ENCODE measurements at regions of chr15 and their contacts with region 1.

Region 1: GRCh38 chr15:70722266-70723121 is 40.9 kb downstream of the UACA start:
- DNase-seq: peak in 4 of 5 donors; percentile 25 to 39 (median 30)
- H3K4me3 ChIP-seq: no peak overlapping the region
- H3K4me3 Mint-ChIP-seq: no peak overlapping the region
- H3K27ac ChIP-seq: no peak overlapping the region
- H3K27ac Mint-ChIP-seq: no peak overlapping the region
- H3K4me1 ChIP-seq: no peaks in the 10 kb centered on the region
- H3K4me1 Mint-ChIP-seq: peaks cover 0 to 2% (median 0%) of the 10 kb centered on the region in 4 donors
- H3K27me3 ChIP-seq: no peaks in the 10 kb centered on the region
- H3K27me3 Mint-ChIP-seq: peaks cover 13 to 14% of the 10 kb centered on the region in 2 donors

Region 2: DNA sequence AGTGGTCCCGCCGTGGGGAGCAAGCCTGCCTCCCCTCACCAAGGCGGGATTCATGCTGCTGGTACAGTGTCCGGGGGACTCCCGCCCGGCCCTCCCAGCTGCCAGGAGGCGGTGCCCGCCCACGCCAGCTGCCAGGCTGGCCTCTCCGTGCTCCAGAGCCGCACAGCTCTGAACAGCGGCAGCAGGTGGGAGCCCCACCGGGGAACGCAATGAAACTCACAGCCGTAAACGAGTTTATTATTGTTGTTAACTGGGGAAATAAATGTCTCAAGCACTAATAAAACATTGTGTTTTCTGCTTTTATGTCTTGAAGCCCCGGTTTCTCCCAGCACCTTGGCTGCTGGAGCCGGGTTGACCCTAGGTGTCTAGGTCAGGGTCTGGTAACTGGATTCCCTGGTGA is 307.1 kb before region 1 on chr15:
- CTCF ChIA-PET with region 1: no interaction called
- POLR2A ChIA-PET with region 1: no interaction called
- intact Hi-C with region 1: no loop called
- DNase-seq: no peak
- H3K4me3 ChIP-seq: no peak overlapping the region
- H3K4me3 Mint-ChIP-seq: no peak overlapping the region
- H3K27ac ChIP-seq: no peak overlapping the region
- H3K27ac Mint-ChIP-seq: no peak overlapping the region
- H3K4me1 ChIP-seq: no peaks in the 10 kb centered on the region
- H3K4me1 Mint-ChIP-seq: peaks cover 0 to 2% (median 0%) of the 10 kb centered on the region in 4 donors
- H3K27me3 ChIP-seq: no peaks in the 10 kb centered on the region
- H3K27me3 Mint-ChIP-seq: peaks cover 6 to 13% of the 10 kb centered on the region in 2 donors

Region 3: DNA sequence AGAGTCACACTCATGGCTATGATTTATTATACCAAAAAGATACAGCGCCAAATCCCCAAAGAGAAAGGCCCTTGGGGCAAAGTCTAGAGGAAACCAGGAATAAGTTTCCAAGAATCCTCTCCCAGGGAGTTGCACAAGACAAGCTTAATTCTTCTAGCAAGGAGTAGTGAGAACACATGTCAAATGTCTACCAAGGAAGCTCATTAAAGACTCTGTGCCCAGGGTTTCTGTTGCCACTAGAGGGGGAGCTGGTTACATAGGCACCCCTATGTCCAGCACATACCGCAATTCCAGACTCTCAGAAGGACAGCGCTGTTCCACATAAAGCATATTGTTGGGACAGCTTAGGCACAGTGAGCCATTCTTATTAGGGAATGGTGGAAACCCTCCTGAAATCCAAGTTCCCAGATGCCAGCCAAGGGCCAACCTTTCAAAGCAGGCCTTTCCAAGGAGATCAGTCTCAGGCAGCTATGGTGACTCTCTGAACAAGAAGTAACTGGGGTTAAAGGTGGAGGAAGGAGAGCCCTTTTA is 153.3 kb before region 1 on chr15:
- CTCF ChIA-PET with region 1: interaction called, 12 read pairs
- POLR2A ChIA-PET with region 1: no interaction called
- intact Hi-C with region 1: no loop called
- DNase-seq: no peak
- H3K4me3 ChIP-seq: no peak overlapping the region
- H3K4me3 Mint-ChIP-seq: no peak overlapping the region
- H3K27ac ChIP-seq: no peak overlapping the region
- H3K27ac Mint-ChIP-seq: no peak overlapping the region
- H3K4me1 ChIP-seq: no peaks in the 10 kb centered on the region
- H3K4me1 Mint-ChIP-seq: peaks cover 0 to 1% (median 0%) of the 10 kb centered on the region in 4 donors
- H3K27me3 ChIP-seq: no peaks in the 10 kb centered on the region
- H3K27me3 Mint-ChIP-seq: no peaks in the 10 kb centered on the region

Measured in CD4-positive, alpha-beta memory T cell (primary cell).